ENCODE measurements at regions of chr5 and their contacts with region 1.

Region 1: GRCh38 chr5:90866333-90866732 is 307.7 kb downstream of the ADGRV1 start:
- DNase-seq: no peak
- H3K4me3 ChIP-seq: no peak overlapping the region
- H3K27ac ChIP-seq: no peak overlapping the region
- H3K4me1 ChIP-seq: no peaks in the 10 kb centered on the region
- H3K27me3 ChIP-seq: no peaks in the 10 kb centered on the region
- CTCF ChIP-seq: peak; percentile 22 to 47 (median 38)
- POLR2A ChIP-seq: no peak

Region 2: DNA sequence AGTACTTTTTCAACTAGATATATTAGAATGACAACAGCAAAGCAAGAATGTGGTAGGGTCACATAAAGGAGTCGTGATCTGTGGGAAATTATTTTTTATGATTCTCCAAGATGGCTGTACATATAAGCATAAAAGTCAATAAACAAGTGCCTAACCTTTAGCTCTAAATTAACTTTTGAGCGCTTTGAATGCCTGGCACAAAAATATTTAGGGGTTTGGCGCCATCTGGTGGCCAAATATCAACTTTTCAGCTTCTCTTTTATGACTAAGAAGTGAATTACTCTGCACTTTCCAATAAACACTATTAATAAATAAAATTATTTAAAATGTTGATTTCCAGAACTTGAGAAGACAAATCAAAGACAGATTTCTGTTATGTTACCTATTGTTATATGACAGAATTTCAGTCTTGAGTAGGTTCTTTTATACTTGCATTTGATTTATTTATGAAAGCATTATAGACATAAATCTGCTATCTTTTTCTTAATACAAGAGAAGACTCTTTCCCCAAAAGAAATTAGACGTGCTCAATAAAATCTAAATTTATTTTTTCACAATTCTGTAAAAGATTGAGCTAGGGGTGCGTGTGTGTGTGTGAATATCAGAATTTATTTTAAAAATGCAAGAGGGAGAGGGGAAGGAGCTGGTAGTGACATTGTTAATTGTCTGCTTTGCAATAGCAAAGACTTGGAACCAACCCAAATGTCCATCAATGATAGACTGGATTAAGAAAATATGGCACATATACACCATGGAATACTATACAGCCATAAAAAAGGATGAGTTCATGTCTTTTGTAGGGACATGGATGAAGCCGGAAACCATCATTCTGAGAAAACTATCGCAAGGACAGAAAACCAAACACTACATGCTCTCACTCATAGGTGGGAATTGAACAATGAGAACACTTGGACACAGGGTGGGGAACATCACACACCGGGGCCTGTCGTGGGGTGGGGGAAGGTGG is 553.5 kb after region 1 on chr5:
- intact Hi-C with region 1: loop called (anchors 10 kb)
- DNase-seq: peak; percentile 45 to 57
- H3K4me3 ChIP-seq: no peak overlapping the region
- H3K27ac ChIP-seq: no peak overlapping the region
- H3K4me1 ChIP-seq: no peaks in the 10 kb centered on the region
- H3K27me3 ChIP-seq: no peaks in the 10 kb centered on the region
- CTCF ChIP-seq: peak; percentile 61 to 80 (median 66)
- POLR2A ChIP-seq: no peak

Measured in uterus (tissue), 4 donors.